ENCODE measurements at regions of chr5 and their contacts with region 1.

Region 1: DNA sequence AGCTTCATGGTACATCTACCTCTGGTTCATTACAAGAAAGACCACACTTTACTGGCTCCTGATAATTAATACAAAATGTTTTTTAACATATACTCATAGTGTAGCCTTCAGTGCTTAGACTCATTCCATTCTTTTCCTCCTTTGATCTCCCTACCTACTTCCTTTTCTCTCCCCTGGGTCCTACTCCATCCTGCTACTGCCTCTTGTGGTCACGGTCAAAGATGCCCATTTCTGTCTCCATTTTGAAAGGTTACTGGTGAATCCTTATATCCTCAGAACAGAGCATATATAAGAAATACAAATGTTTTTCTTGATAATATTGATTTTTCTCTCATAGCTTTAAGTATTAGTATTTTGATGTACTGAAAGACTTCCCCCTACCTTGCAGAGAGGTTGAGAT is 375.9 kb downstream of the ARRDC3 start:
- DNase-seq: no peak
- H3K4me3 ChIP-seq: no peak overlapping the region
- H3K27ac ChIP-seq: no peak overlapping the region
- H3K27me3 ChIP-seq: no peaks in the 10 kb centered on the region
- CTCF ChIP-seq: no peak

Region 2: DNA sequence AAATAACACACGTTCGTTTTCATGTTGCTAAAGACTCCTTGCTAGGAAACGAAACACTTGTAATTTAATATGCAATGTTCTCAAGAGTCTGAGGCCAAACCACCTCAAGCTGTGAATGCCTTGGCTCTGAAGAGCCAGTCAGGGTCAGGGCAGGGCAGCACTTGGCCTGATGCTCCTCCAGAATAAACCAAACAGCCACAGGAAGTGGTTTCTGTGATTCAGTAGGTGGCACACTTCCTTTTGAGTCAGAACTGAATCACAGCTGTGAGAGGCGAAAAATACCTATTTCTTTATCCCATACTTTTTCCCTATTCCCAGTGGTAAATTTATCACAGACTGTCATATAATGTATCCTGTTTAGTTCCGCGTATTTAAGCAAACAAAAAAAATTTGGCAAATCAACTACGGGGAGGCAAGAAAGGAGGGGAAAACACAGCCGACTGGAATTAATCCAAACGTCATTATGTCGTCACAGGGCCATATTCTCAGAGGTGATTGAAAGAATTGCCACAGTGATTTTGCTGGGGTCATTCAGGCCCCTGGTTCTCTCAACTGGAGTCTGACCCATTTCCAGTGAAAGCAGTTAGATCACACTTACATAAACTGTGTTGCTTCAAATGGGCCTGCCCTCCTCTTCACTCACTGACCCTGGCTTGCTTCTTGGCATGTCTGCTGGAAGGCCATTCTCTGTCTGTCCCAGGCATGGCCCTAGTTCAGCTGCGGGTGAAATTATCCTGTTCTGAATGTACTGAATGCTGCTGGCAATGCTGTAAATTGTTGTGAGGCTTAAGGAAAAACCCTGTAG is 304.6 kb after region 1 on chr5:
- CTCF ChIA-PET with region 1: no interaction called
- POLR2A ChIA-PET with region 1: no interaction called
- DNase-seq: peak; percentile 96
- H3K4me3 ChIP-seq: no peak overlapping the region
- H3K27ac ChIP-seq: peak overlapping the region; percentile 90
- H3K27me3 ChIP-seq: no peaks in the 10 kb centered on the region
- CTCF ChIP-seq: no peak

Region 3: GRCh38 chr5:91366571-91366970 is 359.3 kb after region 1 on chr5:
- CTCF ChIA-PET with region 1: interaction called, 12 read pairs
- POLR2A ChIA-PET with region 1: no interaction called
- DNase-seq: no peak
- H3K4me3 ChIP-seq: no peak overlapping the region
- H3K27ac ChIP-seq: no peak overlapping the region
- H3K27me3 ChIP-seq: no peaks in the 10 kb centered on the region
- CTCF ChIP-seq: no peak

Measured in AG04450 (cell line).